ENCODE measurements at regions of chr7 and their contacts with region 1.

Region 1: DNA sequence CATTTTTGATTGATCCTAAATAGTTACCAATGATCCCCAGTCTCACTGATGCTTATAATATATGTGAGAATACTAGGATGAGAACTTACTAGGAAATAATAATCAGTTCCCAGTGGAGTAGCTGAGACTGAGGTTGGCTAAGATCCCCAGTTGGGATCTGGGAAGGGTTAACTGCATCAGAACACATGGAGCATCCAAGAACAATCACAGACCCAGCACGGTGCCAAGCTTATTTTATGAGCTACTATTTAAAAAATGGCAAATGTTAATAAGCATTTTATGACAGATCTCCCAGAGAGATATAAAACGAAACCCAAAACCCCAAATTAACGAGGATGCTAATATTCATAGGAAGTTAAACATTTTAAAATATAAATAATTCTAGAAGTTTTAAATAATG is 379.5 kb downstream of the THSD7A start:
- DNase-seq: no peak
- H3K4me3 ChIP-seq: no peak overlapping the region
- H3K27ac ChIP-seq: no peak overlapping the region
- H3K4me1 ChIP-seq: no peaks in the 10 kb centered on the region
- H3K27me3 ChIP-seq: no peaks in the 10 kb centered on the region
- CTCF ChIP-seq: no peak

Region 2: GRCh38 chr7:11420049-11420448 is 32.4 kb before region 1 on chr7:
- CTCF ChIA-PET with region 1: no interaction called
- POLR2A ChIA-PET with region 1: no interaction called
- intact Hi-C with region 1: no loop called
- DNase-seq: no peak
- H3K4me3 ChIP-seq: no peak overlapping the region
- H3K27ac ChIP-seq: no peak overlapping the region
- H3K4me1 ChIP-seq: 0 out of 2 replicates have a peak, but pooled peaks cover 2% of the 10 kb centered on the region
- H3K27me3 ChIP-seq: no peaks in the 10 kb centered on the region
- CTCF ChIP-seq: no peak

Region 3: GRCh38 chr7:11434366-11434765 is 18.1 kb before region 1 on chr7:
- CTCF ChIA-PET with region 1: no interaction called
- POLR2A ChIA-PET with region 1: interaction called, 10 read pairs
- intact Hi-C with region 1: no loop called
- DNase-seq: no peak
- H3K4me3 ChIP-seq: no peak overlapping the region
- H3K27ac ChIP-seq: no peak overlapping the region
- H3K4me1 ChIP-seq: no peaks in the 10 kb centered on the region
- H3K27me3 ChIP-seq: no peaks in the 10 kb centered on the region
- CTCF ChIP-seq: no peak